Activated CD4-positive, alpha-beta T cell treated with anti-CD3 and anti-CD28 coated beads for 36 hours (primary cell): ENCODE measurements at regions of chr14 and their contacts with region 1.

Region 1: DNA sequence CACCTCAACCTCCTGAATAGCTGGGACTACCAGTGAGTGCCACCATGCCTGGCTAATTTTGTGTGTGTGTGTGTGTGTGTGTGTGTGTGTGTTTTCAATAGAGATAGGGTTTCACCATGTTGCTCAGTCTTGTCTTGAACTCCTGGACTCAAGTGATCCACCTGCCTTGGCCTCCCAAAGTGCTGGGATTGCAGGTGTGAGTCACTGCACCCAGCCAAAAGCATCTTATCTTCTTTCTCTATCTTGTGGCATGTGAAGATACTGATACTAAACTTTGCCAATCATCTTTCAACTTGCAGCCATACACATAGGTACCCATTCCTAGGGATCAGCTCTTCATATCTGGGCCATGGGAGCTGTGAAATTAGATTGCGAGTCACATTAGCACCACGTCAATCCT is 22.7 kb upstream of the FLVCR2 start:
- DNase-seq: no peak
- ATAC-seq: peak; percentile 38
- H3K4me3 Mint-ChIP-seq: no peak overlapping the region
- H3K27ac Mint-ChIP-seq: peak overlapping the region; percentile 55
- H3K4me1 Mint-ChIP-seq: peaks cover 73% of the 10 kb centered on the region
- H3K27me3 Mint-ChIP-seq: no peaks in the 10 kb centered on the region

Region 2: GRCh38 chr14:75506930-75507329 is 48.8 kb before region 1 on chr14:
- CTCF ChIA-PET with region 1: no interaction called
- POLR2A ChIA-PET with region 1: no interaction called
- intact Hi-C with region 1: no loop called
- DNase-seq: no peak
- ATAC-seq: no peak
- H3K4me3 Mint-ChIP-seq: no peak overlapping the region
- H3K27ac Mint-ChIP-seq: no peak overlapping the region
- H3K4me1 Mint-ChIP-seq: peaks cover 23% of the 10 kb centered on the region
- H3K27me3 Mint-ChIP-seq: no peaks in the 10 kb centered on the region

Region 3: GRCh38 chr14:75542588-75543091 is 13.1 kb before region 1 on chr14:
- CTCF ChIA-PET with region 1: interaction called, 98 read pairs
- POLR2A ChIA-PET with region 1: interaction called, 11 read pairs
- intact Hi-C with region 1: loop called in 1 of 2 experiments (anchors 1 kb)
- DNase-seq: peak; percentile 95
- ATAC-seq: peak; percentile 86
- H3K4me3 Mint-ChIP-seq: peak overlapping the region; percentile 59
- H3K27ac Mint-ChIP-seq: peak overlapping the region; percentile 98
- H3K4me1 Mint-ChIP-seq: peaks cover 85% of the 10 kb centered on the region
- H3K27me3 Mint-ChIP-seq: no peaks in the 10 kb centered on the region